ENCODE measurements at regions of chr3 and their contacts with region 1.

Region 1: DNA sequence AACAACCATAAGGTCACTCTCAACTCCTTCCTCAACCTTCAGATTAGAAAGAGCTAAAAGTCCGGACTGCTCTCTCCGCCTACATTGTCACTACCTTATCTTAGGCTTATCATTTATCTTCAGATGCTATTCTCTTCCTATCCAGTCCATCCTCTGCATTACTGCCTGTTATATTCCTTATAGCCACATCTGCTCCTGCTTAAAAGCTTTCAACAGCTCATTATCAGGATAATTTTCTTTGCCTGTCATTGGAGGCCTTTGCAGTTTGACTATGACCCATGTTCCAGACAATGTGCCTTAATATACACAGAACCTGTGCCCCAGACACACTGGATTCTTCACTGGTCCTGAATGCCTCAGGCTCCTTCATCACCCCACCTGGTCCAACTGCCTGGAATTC is 184.1 kb upstream of the SETMAR start:
- DNase-seq: no peak
- ATAC-seq: no peak
- H3K4me3 Mint-ChIP-seq: no peak overlapping the region
- H3K27ac Mint-ChIP-seq: no peak overlapping the region
- H3K4me1 Mint-ChIP-seq: peaks cover 4% of the 10 kb centered on the region
- H3K27me3 Mint-ChIP-seq: no peaks in the 10 kb centered on the region
- CTCF ChIP-seq: no peak

Region 2: DNA sequence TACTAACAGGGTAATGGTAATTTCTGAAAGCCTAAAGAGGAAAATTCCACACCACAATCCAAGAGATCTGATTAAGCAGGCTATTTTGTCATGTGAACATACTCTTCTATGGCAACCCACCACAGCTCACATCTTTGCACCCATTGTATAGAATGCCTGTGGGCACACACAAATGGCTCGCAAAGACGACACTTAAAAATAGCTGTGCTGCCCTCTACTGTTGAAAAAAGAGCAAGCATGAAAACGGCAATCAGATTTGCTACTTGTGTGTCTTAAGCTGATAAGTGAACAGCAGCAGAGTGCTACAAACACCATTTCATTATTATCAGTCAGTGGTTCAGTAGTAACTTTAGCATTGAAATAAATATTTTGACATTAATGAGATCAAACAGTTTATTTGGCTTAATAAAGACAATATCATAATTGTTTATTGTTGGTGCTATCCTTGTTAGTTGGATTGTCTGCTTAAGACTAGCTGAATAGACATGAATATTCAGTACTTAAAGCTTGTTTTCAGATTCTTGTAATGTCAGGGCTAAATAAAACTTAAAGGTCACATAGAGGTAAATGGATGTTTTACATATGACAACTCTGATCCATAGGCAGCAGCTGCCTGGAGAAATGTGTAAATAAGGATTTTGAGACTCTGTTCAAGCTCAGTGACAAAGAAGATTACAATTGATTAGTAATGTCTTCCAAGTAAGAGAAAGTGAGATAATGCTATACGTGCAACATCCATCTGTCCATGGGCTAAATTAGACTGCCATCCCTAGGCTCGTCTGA is 120.8 kb before region 1 on chr3:
- CTCF ChIA-PET with region 1: no interaction called
- POLR2A ChIA-PET with region 1: interaction called, 15 read pairs
- intact Hi-C with region 1: no loop called
- DNase-seq: no peak
- ATAC-seq: peak; percentile 18
- H3K4me3 Mint-ChIP-seq: no peak overlapping the region
- H3K27ac Mint-ChIP-seq: no peak overlapping the region
- H3K4me1 Mint-ChIP-seq: no peaks in the 10 kb centered on the region
- H3K27me3 Mint-ChIP-seq: no peaks in the 10 kb centered on the region
- CTCF ChIP-seq: no peak

Measured in activated B cell treated with CpG ODN at 0.5 μM for 24 hours (primary cell).